ENCODE measurements at regions of chr10 and their contacts with region 1.

Region 1: GRCh38 chr10:69123747-69124562 is at the start of gene VPS26A:
- DNase-seq: peak; percentile 99
- H3K4me3 Mint-ChIP-seq: peak within 1 kb of the TSS; percentile 95
- H3K27ac Mint-ChIP-seq: peak within 1 kb of the TSS; percentile 93
- H3K4me1 Mint-ChIP-seq: peaks cover 38% of the 10 kb centered on the region
- H3K27me3 Mint-ChIP-seq: no peaks in the 10 kb centered on the region
- total RNA-seq, gene VPS26A: 26.2 to 27.9 TPM

Region 2: GRCh38 chr10:68826764-68827591 is 297.0 kb before region 1 on chr10 and contains the start of gene STOX1:
- CTCF ChIA-PET with region 1: no interaction called
- intact Hi-C with region 1: loop called (anchors 10 kb)
- DNase-seq: peak; percentile 56
- H3K4me3 Mint-ChIP-seq: peak within 1 kb of the TSS; percentile 75
- H3K27ac Mint-ChIP-seq: no peak within 1 kb of the TSS
- H3K4me1 Mint-ChIP-seq: peaks cover 13% of the 10 kb centered on the region
- H3K27me3 Mint-ChIP-seq: peaks cover 2% of the 10 kb centered on the region
- total RNA-seq, gene STOX1: 0.38 to 0.42 TPM

Region 3: GRCh38 chr10:68997211-68997610 is 126.7 kb before region 1 on chr10:
- CTCF ChIA-PET with region 1: interaction called, 3 read pairs
- intact Hi-C with region 1: loop called (anchors 2 kb)
- DNase-seq: no peak
- H3K4me3 Mint-ChIP-seq: no peak overlapping the region
- H3K27ac Mint-ChIP-seq: peak overlapping the region; percentile 90
- H3K4me1 Mint-ChIP-seq: peaks cover 47% of the 10 kb centered on the region
- H3K27me3 Mint-ChIP-seq: no peaks in the 10 kb centered on the region

Region 4: DNA sequence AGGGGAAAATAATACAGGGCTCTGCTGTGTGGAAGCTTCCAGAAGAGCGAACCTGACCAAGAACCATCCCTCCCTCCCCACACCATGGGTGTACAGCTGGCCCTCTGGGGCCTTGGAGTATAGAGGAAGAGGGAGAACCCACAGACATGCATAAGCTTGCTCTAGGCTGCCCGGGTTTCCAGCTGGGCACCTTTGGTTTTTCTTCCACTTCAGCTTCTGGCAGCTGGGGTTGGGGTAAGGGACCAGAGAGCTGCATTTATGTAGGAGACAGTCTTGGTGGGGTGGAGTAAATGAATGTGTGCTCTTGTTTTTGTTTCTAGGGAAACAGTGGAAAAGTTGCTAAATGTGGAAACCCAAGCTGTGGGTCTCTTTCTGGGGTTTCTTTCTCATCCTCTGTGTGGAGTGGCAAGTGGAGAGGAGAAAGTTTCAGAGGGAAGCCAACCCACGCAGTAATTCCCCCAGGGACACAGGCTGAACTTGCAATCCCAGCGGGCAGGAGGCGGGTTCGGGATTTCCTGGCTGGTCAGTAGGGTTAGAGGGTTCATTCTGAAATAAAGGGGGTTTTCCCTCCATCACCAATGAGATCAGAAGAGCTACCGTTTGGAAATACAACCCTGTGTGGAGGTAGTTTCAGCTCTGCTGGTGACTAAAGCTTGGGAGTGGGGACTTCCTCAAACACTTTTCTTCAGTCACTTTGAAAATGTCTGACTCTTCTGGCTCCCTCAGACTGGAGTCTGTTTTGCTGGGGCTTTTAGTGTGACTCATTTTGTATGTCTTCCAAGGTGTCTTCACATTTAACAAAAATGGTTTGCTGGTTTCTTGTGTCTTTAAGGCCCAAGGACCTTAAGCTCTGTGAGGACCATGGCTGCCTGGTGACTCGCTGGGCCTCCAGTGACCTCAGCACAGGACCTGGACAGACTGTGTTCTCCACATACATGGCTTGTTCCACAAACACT is 58.3 kb before region 1 on chr10:
- CTCF ChIA-PET with region 1: no interaction called
- intact Hi-C with region 1: loop called (anchors 1 kb)
- DNase-seq: peak; percentile 67
- H3K4me3 Mint-ChIP-seq: peak overlapping the region; percentile 19
- H3K27ac Mint-ChIP-seq: peak overlapping the region; percentile 93
- H3K4me1 Mint-ChIP-seq: peaks cover 39% of the 10 kb centered on the region
- H3K27me3 Mint-ChIP-seq: no peaks in the 10 kb centered on the region

Region 5: DNA sequence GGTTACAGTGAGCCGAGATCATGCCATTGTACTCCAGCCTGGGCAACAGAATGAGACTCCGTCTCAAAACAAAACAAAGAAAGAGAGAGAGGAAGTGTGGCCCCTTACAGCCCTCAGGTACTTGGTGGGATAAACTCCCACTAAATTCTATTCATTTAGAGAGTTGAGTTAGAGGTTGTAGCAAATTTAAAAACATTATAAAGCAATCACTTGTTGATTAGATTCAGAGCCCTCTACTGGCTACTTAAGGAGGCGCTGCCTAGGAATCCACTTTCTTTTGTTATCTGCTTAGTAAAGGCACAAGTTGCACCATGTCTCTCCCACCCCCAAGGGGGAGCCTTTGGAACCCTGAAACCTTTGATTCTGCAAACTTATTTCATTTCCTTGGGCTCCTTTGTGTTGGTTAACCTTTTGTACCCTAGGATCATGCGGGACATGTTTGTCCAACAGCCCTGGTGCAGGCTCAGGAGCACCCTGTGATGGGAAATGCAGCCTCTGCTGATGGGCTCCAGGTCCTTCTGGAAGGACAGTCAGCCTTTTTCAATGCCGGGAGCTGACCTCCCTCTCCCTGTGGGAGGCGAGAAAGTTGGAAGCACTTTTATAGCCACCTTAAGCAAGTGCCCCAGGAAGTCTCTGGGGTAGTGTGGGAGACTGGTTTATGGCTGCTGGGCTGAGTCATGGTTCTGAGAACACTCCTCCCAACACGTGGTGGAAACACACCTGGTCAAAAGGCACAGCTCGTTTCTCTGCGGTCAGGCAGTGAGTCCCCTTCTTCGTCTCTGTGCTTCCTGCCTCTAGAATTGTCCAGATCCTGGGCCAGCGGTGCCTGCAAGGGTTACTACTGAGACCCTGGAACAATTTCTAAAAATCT is 98.4 kb after region 1 on chr10:
- CTCF ChIA-PET with region 1: interaction called, 3 read pairs
- intact Hi-C with region 1: loop called (anchors 1 kb)
- DNase-seq: peak; percentile 93
- H3K4me3 Mint-ChIP-seq: peak overlapping the region; percentile 60
- H3K27ac Mint-ChIP-seq: peak overlapping the region; percentile 85
- H3K4me1 Mint-ChIP-seq: peaks cover 23% of the 10 kb centered on the region
- H3K27me3 Mint-ChIP-seq: no peaks in the 10 kb centered on the region

Region 6: DNA sequence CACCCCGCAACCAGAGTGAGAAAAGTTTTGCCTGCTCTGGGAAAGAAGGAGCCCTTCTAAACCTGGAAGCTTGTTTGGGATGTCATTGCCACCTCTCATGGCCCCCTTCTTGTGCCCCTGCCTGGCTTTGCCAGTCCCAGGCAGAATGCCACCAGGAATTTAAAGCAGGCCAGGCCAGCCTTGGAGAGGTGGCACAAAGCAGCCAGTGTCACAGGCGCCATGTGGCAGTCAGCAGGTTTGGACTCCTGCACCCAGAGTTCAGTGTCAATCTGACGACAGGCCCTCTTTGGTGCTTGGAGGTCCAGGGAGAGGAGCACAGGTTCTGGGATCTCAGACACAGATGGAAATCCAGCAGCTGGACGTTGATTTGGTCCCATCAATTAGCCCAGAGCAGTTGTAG is 167.0 kb after region 1 on chr10:
- CTCF ChIA-PET with region 1: no interaction called
- intact Hi-C with region 1: no loop called
- DNase-seq: no peak
- H3K4me3 Mint-ChIP-seq: no peak overlapping the region
- H3K27ac Mint-ChIP-seq: no peak overlapping the region
- H3K4me1 Mint-ChIP-seq: no peaks in the 10 kb centered on the region
- H3K27me3 Mint-ChIP-seq: no peaks in the 10 kb centered on the region

Region 7: GRCh38 chr10:69506834-69507721 is 383.1 kb after region 1 on chr10:
- CTCF ChIA-PET with region 1: no interaction called
- intact Hi-C with region 1: loop called (anchors 5 kb)
- DNase-seq: no peak
- H3K4me3 Mint-ChIP-seq: peak overlapping the region; percentile 66
- H3K27ac Mint-ChIP-seq: peak overlapping the region; percentile 34
- H3K4me1 Mint-ChIP-seq: peaks cover 10% of the 10 kb centered on the region
- H3K27me3 Mint-ChIP-seq: no peaks in the 10 kb centered on the region

Region 8: DNA sequence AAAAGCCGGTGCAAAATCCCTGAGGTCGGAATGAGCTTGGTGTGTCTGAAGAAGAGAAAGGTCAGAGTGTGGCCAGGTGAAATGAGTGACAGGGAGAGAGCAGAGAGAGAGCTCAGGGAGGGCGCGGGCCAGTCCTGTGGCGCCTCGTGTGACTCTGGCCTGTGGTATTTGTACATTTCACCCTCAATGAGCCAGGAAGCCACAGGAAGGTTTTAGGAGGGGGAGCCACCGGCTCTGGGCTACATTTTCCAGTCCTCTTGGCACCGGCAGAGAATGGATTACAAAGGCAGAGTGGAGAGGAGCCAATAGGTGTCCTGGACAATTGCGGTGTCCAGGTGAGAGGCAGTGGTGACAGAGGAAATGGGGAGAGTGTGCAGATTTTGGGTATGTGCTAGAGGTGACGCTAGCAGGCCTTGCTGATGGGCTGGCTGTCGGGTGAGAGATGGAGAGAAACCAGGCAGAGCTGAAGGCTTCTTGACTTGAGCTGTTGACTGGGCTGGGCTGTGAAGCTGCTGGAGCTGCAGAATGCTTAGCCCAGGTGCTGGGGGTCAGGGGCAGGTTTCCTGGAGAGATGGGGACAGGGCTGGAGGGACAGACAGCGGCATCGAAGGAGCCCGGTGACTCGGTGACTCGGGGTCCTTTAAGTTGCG is 715.9 kb after region 1 on chr10:
- CTCF ChIA-PET with region 1: no interaction called
- intact Hi-C with region 1: no loop called
- DNase-seq: no peak
- H3K4me3 Mint-ChIP-seq: no peak overlapping the region
- H3K27ac Mint-ChIP-seq: no peak overlapping the region
- H3K4me1 Mint-ChIP-seq: peaks cover 11% of the 10 kb centered on the region
- H3K27me3 Mint-ChIP-seq: peaks cover 11% of the 10 kb centered on the region